GM12878 (cell line): ENCODE measurements at regions of chr20 and their contacts with region 1.

Region 1: GRCh38 chr20:39885975-39886649 is 802.9 kb downstream of the MAFB start:
- DNase-seq: no peak
- ATAC-seq: peak; percentile 88
- H3K4me3 ChIP-seq: no peak overlapping the region
- H3K27ac ChIP-seq: no peak overlapping the region
- H3K4me1 ChIP-seq: no peaks in the 10 kb centered on the region
- H3K27me3 ChIP-seq: no peaks in the 10 kb centered on the region
- CTCF ChIP-seq: peak; percentile 56 to 73 (median 70); a peak in 5 of 6 replicates
- EP300 ChIP-seq: no peak
- POLR2A ChIP-seq: no peak
- RAD21 ChIP-seq: peak; percentile 63

Region 2: GRCh38 chr20:39954621-39955020 is 68.5 kb after region 1 on chr20:
- CTCF ChIA-PET with region 1: no interaction called
- POLR2A ChIA-PET with region 1: no interaction called
- RAD21 ChIA-PET with region 1: no interaction called
- SMC1A ChIA-PET with region 1: no interaction called
- in situ Hi-C with region 1: no loop called
- intact Hi-C with region 1: no loop called
- DNase-seq: no peak
- ATAC-seq: no peak
- H3K4me3 ChIP-seq: no peak overlapping the region
- H3K27ac ChIP-seq: no peak overlapping the region
- H3K4me1 ChIP-seq: no peaks in the 10 kb centered on the region
- H3K27me3 ChIP-seq: peaks cover 0 to 2% of the 10 kb centered on the region in 2 experiments; a peak in 2 of 4 replicates
- CTCF ChIP-seq: no peak
- EP300 ChIP-seq: no peak
- POLR2A ChIP-seq: no peak
- RAD21 ChIP-seq: no peak

Region 3: DNA sequence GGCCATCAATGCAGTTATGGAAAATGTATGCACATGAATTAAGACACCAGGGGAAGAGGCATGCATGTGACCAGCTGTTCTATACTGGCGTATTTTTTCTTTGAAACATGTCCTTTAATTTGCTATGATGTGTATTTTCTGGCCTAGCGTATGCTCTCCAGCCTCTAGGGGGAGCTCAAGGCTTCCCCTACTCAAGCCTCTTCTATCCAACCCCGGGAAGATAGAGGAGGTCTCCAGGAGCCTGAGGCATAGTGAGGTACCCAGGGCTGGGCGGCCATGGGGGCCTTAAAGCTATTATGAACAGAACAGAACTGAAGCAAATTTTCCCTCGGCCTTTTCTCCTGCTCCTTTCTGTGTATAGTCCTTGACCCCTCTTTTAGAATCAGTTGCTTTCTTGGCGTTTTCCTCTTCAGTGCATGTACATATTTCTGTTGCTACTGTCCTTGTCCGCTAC is 274.0 kb after region 1 on chr20:
- CTCF ChIA-PET with region 1: interaction called, 3 read pairs
- POLR2A ChIA-PET with region 1: no interaction called
- RAD21 ChIA-PET with region 1: no interaction called
- SMC1A ChIA-PET with region 1: no interaction called
- in situ Hi-C with region 1: no loop called
- intact Hi-C with region 1: loop called (anchors 10 kb)
- DNase-seq: peak; percentile 7
- ATAC-seq: peak; percentile 81
- H3K4me3 ChIP-seq: no peak overlapping the region
- H3K27ac ChIP-seq: no peak overlapping the region
- H3K4me1 ChIP-seq: peaks cover 13% of the 10 kb centered on the region
- H3K27me3 ChIP-seq: no peaks in the 10 kb centered on the region
- CTCF ChIP-seq: peak; percentile 61 to 76 (median 73)
- EP300 ChIP-seq: no peak
- POLR2A ChIP-seq: no peak
- RAD21 ChIP-seq: peak; percentile 71

Region 4: GRCh38 chr20:40251284-40251932 is 365.3 kb after region 1 on chr20:
- CTCF ChIA-PET with region 1: interaction called, 6 read pairs
- POLR2A ChIA-PET with region 1: no interaction called
- RAD21 ChIA-PET with region 1: interaction called, 3 read pairs
- SMC1A ChIA-PET with region 1: interaction called, 5 read pairs
- in situ Hi-C with region 1: loop called (anchors 10 kb)
- intact Hi-C with region 1: loop called (anchors 2 kb)
- DNase-seq: no peak
- ATAC-seq: no peak
- H3K4me3 ChIP-seq: no peak overlapping the region
- H3K27ac ChIP-seq: no peak overlapping the region
- H3K4me1 ChIP-seq: no peaks in the 10 kb centered on the region
- H3K27me3 ChIP-seq: no peaks in the 10 kb centered on the region
- CTCF ChIP-seq: peak; percentile 50 to 65 (median 57); a peak in 5 of 6 replicates
- EP300 ChIP-seq: no peak
- POLR2A ChIP-seq: no peak
- RAD21 ChIP-seq: peak; percentile 56

Region 5: GRCh38 chr20:40689943-40690835 is 804.1 kb after region 1 on chr20:
- CTCF ChIA-PET with region 1: no interaction called
- POLR2A ChIA-PET with region 1: no interaction called
- RAD21 ChIA-PET with region 1: no interaction called
- SMC1A ChIA-PET with region 1: no interaction called
- in situ Hi-C with region 1: loop called (anchors 5 kb)
- intact Hi-C with region 1: loop called (anchors 1 kb)
- DNase-seq: no peak
- ATAC-seq: peak; percentile 93
- H3K4me3 ChIP-seq: peak overlapping the region; percentile 55; the same call in 1 of the 2 replicates
- H3K27ac ChIP-seq: no peak overlapping the region
- H3K4me1 ChIP-seq: no peaks in the 10 kb centered on the region
- H3K27me3 ChIP-seq: peaks cover 21 to 32% of the 10 kb centered on the region in 2 experiments
- CTCF ChIP-seq: peak; percentile 79 to 89 (median 85)
- EP300 ChIP-seq: no peak
- POLR2A ChIP-seq: no peak
- RAD21 ChIP-seq: peak; percentile 74